K562 (cell line): ENCODE measurements at regions of chr15 and their contacts with region 1.

Region 1: DNA sequence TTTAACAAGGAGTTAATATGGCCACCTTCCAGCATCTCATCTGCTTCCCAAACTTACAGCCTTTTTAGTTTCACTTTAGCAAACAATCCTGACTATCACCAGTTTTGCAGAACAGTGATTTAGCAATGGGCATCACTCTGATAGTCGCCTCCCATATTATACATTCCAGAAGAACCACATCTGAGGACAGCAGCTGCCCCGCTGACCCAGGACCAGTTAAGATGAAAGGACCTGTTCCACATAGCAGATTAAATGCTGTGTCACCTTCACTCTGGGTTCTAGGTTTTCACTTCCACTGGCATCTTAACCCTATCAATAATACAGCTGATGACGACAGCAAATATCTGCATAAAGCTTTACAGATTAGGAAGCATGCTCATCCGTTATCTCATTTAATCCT is 99.8 kb downstream of the TRIM69 start:
- DNase-seq: no peak
- ATAC-seq: no peak
- H3K4me3 ChIP-seq: no peak overlapping the region
- H3K27ac ChIP-seq: no peak overlapping the region
- H3K4me1 ChIP-seq: peaks cover 0 to 8% of the 10 kb centered on the region in 2 experiments; a peak in 3 of 5 replicates
- H3K27me3 ChIP-seq: no peaks in the 10 kb centered on the region
- CTCF ChIP-seq: no peak
- EP300 ChIP-seq: no peak
- POLR2A ChIP-seq: no peak
- RAD21 ChIP-seq: no peak

Region 2: GRCh38 chr15:44394062-44394461 is 442.0 kb before region 1 on chr15:
- CTCF ChIA-PET with region 1: no interaction called
- POLR2A ChIA-PET with region 1: no interaction called
- in situ Hi-C with region 1: no loop called
- intact Hi-C with region 1: no loop called
- DNase-seq: no peak
- ATAC-seq: no peak; the same call in 2 of the 3 replicates
- H3K4me3 ChIP-seq: no peak overlapping the region
- H3K27ac ChIP-seq: no peak overlapping the region
- H3K4me1 ChIP-seq: no peaks in the 10 kb centered on the region
- H3K27me3 ChIP-seq: no peaks in the 10 kb centered on the region
- CTCF ChIP-seq: no peak
- EP300 ChIP-seq: no peak
- POLR2A ChIP-seq: no peak
- RAD21 ChIP-seq: no peak

Region 3: GRCh38 chr15:44798826-44799225 is 37.3 kb before region 1 on chr15:
- CTCF ChIA-PET with region 1: no interaction called
- POLR2A ChIA-PET with region 1: no interaction called
- in situ Hi-C with region 1: no loop called
- intact Hi-C with region 1: loop called (anchors 10 kb)
- DNase-seq: peak; percentile 26 to 46 (median 40)
- ATAC-seq: peak; percentile 87
- H3K4me3 ChIP-seq: no peak overlapping the region
- H3K27ac ChIP-seq: no peak overlapping the region
- H3K4me1 ChIP-seq: peaks cover 0 to 14% of the 10 kb centered on the region in 2 experiments; a peak in 3 of 5 replicates
- H3K27me3 ChIP-seq: no peaks in the 10 kb centered on the region
- CTCF ChIP-seq: peak; percentile 11 to 40 (median 40); a peak in 3 of 6 replicates
- EP300 ChIP-seq: no peak
- POLR2A ChIP-seq: no peak
- RAD21 ChIP-seq: peak; percentile 11 to 40; a peak in 1 of 4 replicates

Region 4: DNA sequence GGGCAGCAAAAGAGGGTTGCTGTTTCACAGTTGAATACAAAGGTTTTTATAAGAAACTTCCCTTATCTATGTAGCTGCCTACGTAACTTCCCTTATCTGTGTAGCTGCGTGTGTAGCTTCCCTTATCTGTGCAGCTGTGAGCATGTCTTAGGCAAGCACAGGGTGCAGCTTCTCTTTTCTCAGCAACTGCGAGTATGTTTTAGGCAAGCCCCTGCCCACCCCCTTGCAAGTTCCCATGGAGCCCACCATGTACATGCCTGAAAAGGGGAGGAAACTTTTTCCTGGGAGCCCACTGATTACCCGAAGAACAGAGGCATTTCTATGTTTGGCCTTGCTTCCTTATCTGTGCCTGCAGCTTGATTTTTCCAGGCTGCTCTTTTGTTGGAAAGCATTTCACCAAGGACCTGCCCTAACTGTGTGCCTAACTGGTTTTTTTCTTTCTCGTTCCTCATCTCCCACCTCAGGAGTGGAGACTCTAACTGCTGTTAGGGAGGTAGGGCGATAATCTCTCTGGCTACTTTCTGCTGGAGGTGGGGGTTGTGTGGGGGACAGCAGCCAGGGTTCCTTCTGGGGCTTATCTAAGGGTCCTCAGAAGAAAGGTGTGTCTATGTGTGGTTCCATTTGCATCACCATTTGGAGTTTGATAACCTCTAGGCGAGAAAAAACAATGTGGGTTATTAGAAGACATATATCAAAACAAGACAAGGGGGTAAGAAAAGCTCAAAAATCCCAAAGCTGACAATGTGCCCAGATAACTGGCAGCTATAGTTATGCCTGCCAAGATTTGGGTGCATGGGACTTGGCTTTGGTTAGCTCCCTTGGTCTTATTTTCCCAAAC is 212.9 kb after region 1 on chr15:
- CTCF ChIA-PET with region 1: no interaction called
- POLR2A ChIA-PET with region 1: no interaction called
- in situ Hi-C with region 1: loop called (anchors 10 kb)
- intact Hi-C with region 1: no loop called
- DNase-seq: peak; percentile 86 to 94 (median 90)
- ATAC-seq: peak; percentile 93
- H3K4me3 ChIP-seq: peak overlapping the region; percentile 4; the same call in 1 of the 2 replicates
- H3K27ac ChIP-seq: peak overlapping the region; percentile 78
- H3K4me1 ChIP-seq: peaks cover 7 to 43% of the 10 kb centered on the region in 2 experiments; a peak in 4 of 5 replicates
- H3K27me3 ChIP-seq: no peaks in the 10 kb centered on the region
- CTCF ChIP-seq: no peak
- EP300 ChIP-seq: peak; percentile 92
- POLR2A ChIP-seq: no peak
- RAD21 ChIP-seq: no peak; a peak in 1 of 4 replicates

Region 5: DNA sequence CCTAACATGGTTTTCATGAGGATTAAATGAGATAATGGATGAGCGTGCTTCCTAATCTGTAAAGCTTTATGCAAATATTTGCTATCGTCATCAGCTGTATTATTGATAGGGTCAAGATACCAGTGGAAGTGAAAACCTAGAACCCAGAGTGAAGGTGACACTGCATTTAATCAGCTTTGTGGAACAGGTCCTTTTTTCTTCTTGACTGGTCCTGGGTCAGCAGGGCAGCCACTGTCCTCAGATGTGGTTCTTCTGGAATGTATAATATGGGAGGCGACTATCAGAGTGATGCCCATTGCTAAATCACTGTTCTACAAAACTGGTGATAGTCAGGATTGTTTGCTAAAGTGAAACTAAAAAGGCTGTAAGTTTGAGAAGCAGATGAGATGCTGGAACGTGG is 228.3 kb after region 1 on chr15:
- CTCF ChIA-PET with region 1: no interaction called
- POLR2A ChIA-PET with region 1: interaction called, 3 read pairs
- in situ Hi-C with region 1: loop called (anchors 5 kb)
- intact Hi-C with region 1: no loop called
- DNase-seq: no peak
- ATAC-seq: no peak
- H3K4me3 ChIP-seq: no peak overlapping the region
- H3K27ac ChIP-seq: no peak overlapping the region
- H3K4me1 ChIP-seq: peaks cover 0 to 1% of the 10 kb centered on the region in 2 experiments; a peak in 3 of 5 replicates
- H3K27me3 ChIP-seq: no peaks in the 10 kb centered on the region
- CTCF ChIP-seq: no peak
- EP300 ChIP-seq: no peak
- POLR2A ChIP-seq: no peak
- RAD21 ChIP-seq: no peak